CD4-positive, alpha-beta memory T cell (primary cell): ENCODE measurements at regions of chr19 and their contacts with region 1.

Region 1: DNA sequence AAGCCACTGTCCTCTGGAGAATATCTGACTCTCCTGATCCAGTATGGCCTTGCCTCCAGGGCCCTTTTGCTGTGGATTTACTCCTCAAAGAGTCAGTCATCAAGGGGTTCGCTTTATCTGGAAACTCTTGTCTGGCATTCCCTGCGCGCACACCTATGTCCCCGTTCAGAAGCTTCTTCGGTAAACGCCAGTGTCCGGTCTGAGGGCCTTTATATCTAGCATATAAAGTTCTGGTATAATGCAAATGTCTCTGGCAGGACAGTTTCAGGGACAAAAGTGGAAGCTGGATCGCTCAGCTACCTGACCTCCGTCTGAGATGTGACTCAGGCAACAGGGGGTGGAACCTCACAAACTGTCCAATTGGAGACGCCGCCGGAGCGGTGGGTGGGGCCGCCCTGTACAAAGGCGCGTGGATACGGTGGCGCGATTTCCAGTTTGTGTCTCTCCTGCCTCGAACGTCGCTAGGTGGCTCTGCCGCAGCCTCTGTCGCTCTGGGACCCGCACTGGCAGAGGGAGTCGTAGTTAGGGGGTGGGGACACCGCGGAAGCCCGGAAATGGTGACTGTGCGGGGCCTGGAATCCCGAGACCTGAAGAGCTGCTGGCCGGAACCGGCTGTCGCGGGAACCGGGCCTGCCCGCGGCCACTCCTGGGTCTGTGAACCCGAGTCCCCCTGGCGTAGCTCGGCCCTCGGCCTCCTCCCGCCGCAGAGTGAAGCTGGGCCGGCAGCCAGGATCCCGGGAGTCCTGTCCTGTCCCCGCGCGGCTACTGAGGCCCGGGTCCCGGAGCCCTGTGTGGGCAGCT is 10.6 kb upstream of the ZNF709 start:
- DNase-seq: peak; percentile 86 to 94 (median 92)
- H3K4me3 ChIP-seq: peak overlapping the region; percentile 62 to 64
- H3K4me3 Mint-ChIP-seq: peak overlapping the region; percentile 87 to 98 (median 92)
- H3K27ac ChIP-seq: peak overlapping the region; percentile 51
- H3K27ac Mint-ChIP-seq: peak overlapping the region; percentile 89 to 97 (median 96)
- H3K4me1 ChIP-seq: peaks cover 5% of the 10 kb centered on the region
- H3K4me1 Mint-ChIP-seq: peaks cover 7 to 16% (median 11%) of the 10 kb centered on the region in 4 donors
- H3K27me3 ChIP-seq: no peaks in the 10 kb centered on the region
- H3K27me3 Mint-ChIP-seq: no peaks in the 10 kb centered on the region

Region 2: DNA sequence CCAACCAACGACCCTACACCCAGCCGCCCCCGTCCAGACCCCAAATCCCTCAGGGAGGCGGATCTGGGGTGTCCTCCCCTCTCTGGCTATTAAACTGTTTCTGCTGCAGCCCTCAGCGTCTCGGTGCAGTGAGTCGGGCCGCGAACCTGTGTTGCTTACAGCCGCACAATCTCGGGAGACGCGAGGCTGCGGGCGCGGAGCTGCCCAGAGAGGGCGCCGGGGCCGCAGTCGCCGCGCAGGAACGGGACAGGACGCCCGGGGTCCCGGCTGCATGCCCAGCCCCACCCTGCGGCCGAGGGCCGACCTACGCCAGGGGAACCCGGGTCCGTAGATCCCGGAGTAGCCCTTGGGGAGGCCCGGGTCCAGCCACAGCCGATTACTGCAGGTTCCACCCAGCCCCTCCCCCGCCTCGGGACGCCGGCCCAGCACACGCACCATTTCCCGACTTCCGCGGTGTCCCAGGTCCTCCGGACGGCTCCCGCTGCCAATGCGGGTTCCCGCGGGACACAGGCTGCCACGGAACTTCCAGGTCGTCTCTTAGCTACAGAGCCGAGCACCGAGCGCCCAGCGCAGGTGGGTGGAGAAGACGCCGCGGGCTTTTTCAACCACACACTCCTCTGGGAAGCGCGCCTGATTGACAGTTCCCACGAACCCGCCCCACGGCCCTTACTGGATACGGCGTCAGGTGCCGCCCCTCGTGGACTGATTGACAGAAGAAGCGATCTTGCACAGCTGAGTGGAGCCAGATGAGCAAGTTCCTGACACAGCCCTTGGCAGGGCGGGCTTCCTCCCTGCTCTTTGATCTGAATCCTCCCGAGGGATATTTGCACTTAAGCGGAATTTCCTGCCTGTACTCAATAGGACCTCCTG is 94.3 kb before region 1 on chr19 and contains the start of gene ZNF799:
- CTCF ChIA-PET with region 1: no interaction called
- POLR2A ChIA-PET with region 1: interaction called, 4 read pairs
- intact Hi-C with region 1: loop called (anchors 2 kb)
- DNase-seq: peak; percentile 76 to 83 (median 77)
- H3K4me3 ChIP-seq: peak within 1 kb of the TSS; percentile 64 to 81
- H3K4me3 Mint-ChIP-seq: peak within 1 kb of the TSS; percentile 95 to 96 (median 96)
- H3K27ac ChIP-seq: peak within 1 kb of the TSS; percentile 53
- H3K27ac Mint-ChIP-seq: peak within 1 kb of the TSS; percentile 83 to 95 (median 90)
- H3K4me1 ChIP-seq: peaks cover 6% of the 10 kb centered on the region
- H3K4me1 Mint-ChIP-seq: peaks cover 12 to 27% (median 21%) of the 10 kb centered on the region in 4 donors
- H3K27me3 ChIP-seq: no peaks in the 10 kb centered on the region
- H3K27me3 Mint-ChIP-seq: no peaks in the 10 kb centered on the region
- total RNA-seq, gene ZNF799: 10.1 to 10.3 TPM

Region 3: GRCh38 chr19:12551060-12551832 is 56.0 kb after region 1 on chr19 and contains the start of gene ZNF564:
- CTCF ChIA-PET with region 1: interaction called, 4 read pairs
- POLR2A ChIA-PET with region 1: interaction called, 9 read pairs
- intact Hi-C with region 1: loop called (anchors 1 kb)
- DNase-seq: peak; percentile 94 to 98 (median 95)
- H3K4me3 ChIP-seq: peak within 1 kb of the TSS; percentile 44 to 98
- H3K4me3 Mint-ChIP-seq: peak within 1 kb of the TSS; percentile 92 to 100 (median 98)
- H3K27ac ChIP-seq: peak within 1 kb of the TSS; percentile 83
- H3K27ac Mint-ChIP-seq: peak within 1 kb of the TSS; percentile 91 to 99 (median 97)
- H3K4me1 ChIP-seq: peaks cover 42% of the 10 kb centered on the region
- H3K4me1 Mint-ChIP-seq: peaks cover 28 to 56% (median 39%) of the 10 kb centered on the region in 4 donors
- H3K27me3 ChIP-seq: no peaks in the 10 kb centered on the region
- H3K27me3 Mint-ChIP-seq: no peaks in the 10 kb centered on the region
- total RNA-seq, gene ZNF564: 29.2 to 30.6 TPM

Region 4: DNA sequence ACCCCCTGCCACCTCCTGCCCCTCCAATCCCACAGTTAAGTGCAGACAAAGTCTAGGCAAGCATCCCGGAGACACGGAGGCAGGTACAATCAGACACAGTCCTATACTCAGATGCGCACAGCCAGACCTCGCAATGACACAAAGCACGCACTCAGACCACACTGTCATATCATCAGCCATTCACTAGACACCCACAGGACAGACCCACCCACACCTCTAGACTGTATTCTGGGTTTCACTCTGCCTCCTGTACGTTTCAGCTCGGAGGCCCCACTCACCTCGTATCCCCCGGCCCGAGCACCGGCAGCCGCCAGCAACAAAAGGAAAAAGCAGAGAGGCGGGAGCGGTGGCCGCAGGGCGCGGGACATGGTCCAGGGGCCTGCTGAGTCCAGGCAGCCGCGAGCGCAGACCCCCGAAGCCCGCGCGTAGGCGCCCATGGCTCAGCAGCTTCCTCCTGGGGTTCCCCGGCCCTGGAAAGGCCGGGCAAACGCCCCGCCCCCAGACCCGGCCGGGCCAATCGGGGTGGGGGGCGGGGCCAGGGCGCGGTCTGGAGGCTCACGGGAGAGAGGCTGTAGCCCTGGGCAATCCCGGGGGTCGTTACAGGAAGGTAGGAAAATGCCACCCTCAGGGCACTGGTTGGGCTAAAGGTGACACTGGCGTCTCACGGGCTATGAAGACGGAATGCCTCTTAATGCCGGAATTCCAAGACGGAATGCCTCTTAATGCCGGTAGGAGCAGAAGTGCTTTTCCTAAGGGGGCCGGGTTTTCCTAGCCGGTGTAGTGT is 171.3 kb after region 1 on chr19 and contains the starts of genes MAN2B1 and WDR83:
- CTCF ChIA-PET with region 1: no interaction called
- POLR2A ChIA-PET with region 1: interaction called, 5 read pairs
- intact Hi-C with region 1: loop called (anchors 2 kb)
- DNase-seq: peak; percentile 73 to 81 (median 78)
- H3K4me3 ChIP-seq: peak within 1 kb of the TSS; percentile 65 to 91
- H3K4me3 Mint-ChIP-seq: peak within 1 kb of the TSS; percentile 91 to 99 (median 94)
- H3K27ac ChIP-seq: peak within 1 kb of the TSS; percentile 98
- H3K27ac Mint-ChIP-seq: peak within 1 kb of the TSS; percentile 90 to 99 (median 97)
- H3K4me1 ChIP-seq: peaks cover 52% of the 10 kb centered on the region
- H3K4me1 Mint-ChIP-seq: peaks cover 24 to 70% (median 46%) of the 10 kb centered on the region in 4 donors
- H3K27me3 ChIP-seq: no peaks in the 10 kb centered on the region
- H3K27me3 Mint-ChIP-seq: no peaks in the 10 kb centered on the region
- total RNA-seq, gene MAN2B1: 137 to 141 TPM
- total RNA-seq, gene WDR83: 18.3 to 19.3 TPM